ENCODE measurements at regions of chr13 and their contacts with region 1.

Region 1: GRCh38 chr13:24995226-24995804 is 100.6 kb upstream of the PABPC3 start:
- DNase-seq: peak; percentile 75
- ATAC-seq: peak; percentile 96
- H3K4me3 ChIP-seq: no peak overlapping the region
- H3K27ac ChIP-seq: no peak overlapping the region
- H3K4me1 ChIP-seq: no peaks in the 10 kb centered on the region
- H3K27me3 ChIP-seq: no peaks in the 10 kb centered on the region; a peak in 2 of 5 replicates
- CTCF ChIP-seq: peak; percentile 78
- EP300 ChIP-seq: no peak
- POLR2A ChIP-seq: no peak
- RAD21 ChIP-seq: 0 out of 2 replicates have a peak, but pooled peaks have one; percentile 10

Region 2: GRCh38 chr13:25032160-25032559 is 36.8 kb after region 1 on chr13:
- CTCF ChIA-PET with region 1: interaction called, 19 read pairs
- POLR2A ChIA-PET with region 1: no interaction called
- in situ Hi-C with region 1: loop called (anchors 5 kb)
- intact Hi-C with region 1: loop called (anchors 1 kb)
- DNase-seq: no peak
- ATAC-seq: no peak
- H3K4me3 ChIP-seq: no peak overlapping the region
- H3K27ac ChIP-seq: no peak overlapping the region
- H3K4me1 ChIP-seq: no peaks in the 10 kb centered on the region
- H3K27me3 ChIP-seq: peaks cover 0 to 4% of the 10 kb centered on the region in 2 experiments; a peak in 1 of 5 replicates
- CTCF ChIP-seq: no peak
- EP300 ChIP-seq: no peak
- POLR2A ChIP-seq: no peak
- RAD21 ChIP-seq: no peak

Region 3: DNA sequence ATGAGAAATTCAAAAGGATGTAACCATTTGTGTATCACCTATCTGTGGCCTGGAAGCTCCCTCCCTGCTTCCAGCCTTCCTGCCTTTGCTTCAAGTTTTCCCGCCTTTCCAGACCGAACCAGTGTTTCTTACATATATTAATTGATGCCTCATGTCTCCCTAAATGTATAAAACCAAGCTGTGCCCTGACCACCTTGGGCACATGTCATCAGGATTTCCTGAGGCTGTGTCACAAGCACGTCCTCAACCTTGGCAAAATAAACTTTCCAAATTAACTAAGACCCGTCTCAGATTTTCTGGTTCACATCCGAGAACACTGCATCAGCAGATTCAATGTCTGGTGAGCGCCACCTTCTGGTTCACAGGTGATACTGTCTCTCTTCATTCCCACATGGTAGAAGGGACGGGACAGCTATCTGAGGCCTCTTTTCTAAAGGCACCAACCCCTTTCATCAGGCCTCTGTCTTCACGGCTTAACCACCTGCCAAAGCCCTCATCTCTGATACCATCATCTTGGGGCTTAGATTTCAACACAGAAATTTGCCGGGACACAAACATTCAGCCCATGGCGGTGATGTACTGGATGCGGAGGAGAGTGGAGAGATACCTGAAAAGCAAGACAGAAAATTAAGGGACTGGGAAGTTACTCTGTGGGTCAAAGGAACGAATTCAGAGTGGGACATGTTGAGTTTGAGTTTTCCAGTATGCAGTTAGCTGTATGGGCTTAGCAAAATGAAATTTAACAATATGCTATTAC is 41.9 kb after region 1 on chr13:
- CTCF ChIA-PET with region 1: interaction called, 19 read pairs
- POLR2A ChIA-PET with region 1: no interaction called
- in situ Hi-C with region 1: loop called (anchors 5 kb)
- intact Hi-C with region 1: loop called (anchors 1 kb)
- DNase-seq: peak; percentile 52
- ATAC-seq: peak; percentile 93
- H3K4me3 ChIP-seq: no peak overlapping the region
- H3K27ac ChIP-seq: no peak overlapping the region
- H3K4me1 ChIP-seq: no peaks in the 10 kb centered on the region
- H3K27me3 ChIP-seq: peaks cover 0 to 11% of the 10 kb centered on the region in 2 experiments; a peak in 3 of 5 replicates
- CTCF ChIP-seq: peak; percentile 78
- EP300 ChIP-seq: no peak
- POLR2A ChIP-seq: no peak
- RAD21 ChIP-seq: no peak

Region 4: DNA sequence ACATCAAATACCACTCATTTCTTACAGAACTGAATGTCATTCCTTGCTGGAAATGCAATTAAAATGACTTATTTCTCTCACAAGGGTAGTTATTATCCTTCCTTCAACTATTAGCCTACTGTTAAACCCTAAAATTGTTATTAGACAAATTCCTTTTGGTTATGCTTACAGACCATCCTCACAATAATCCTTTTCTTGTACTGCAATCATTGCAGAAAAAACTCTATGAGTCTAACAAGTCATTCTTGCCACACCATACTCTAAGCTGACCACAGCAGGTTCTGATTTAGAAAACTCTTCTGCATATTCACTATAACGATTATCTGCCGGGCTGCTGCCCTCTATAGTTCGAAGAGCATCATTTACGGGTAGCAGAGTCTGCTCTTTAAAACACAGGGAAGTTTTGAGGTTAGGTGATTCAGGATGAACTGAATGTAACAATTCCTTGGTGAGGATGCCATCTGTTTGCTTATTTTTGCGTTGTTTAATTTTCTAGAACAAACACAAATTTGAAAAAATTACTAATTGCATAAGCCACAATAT is 253.8 kb after region 1 on chr13:
- CTCF ChIA-PET with region 1: no interaction called
- POLR2A ChIA-PET with region 1: no interaction called
- in situ Hi-C with region 1: no loop called
- intact Hi-C with region 1: no loop called
- DNase-seq: peak; percentile 19
- ATAC-seq: peak; percentile 69
- H3K4me3 ChIP-seq: no peak overlapping the region
- H3K27ac ChIP-seq: no peak overlapping the region
- H3K4me1 ChIP-seq: peaks cover 8% of the 10 kb centered on the region
- H3K27me3 ChIP-seq: no peaks in the 10 kb centered on the region
- CTCF ChIP-seq: peak; percentile 33; the same call in 1 of the 2 replicates
- EP300 ChIP-seq: no peak
- POLR2A ChIP-seq: no peak
- RAD21 ChIP-seq: no peak

Region 5: GRCh38 chr13:26095338-26095737 is 1100.0 kb after region 1 on chr13:
- CTCF ChIA-PET with region 1: no interaction called
- POLR2A ChIA-PET with region 1: no interaction called
- in situ Hi-C with region 1: loop called (anchors 5 kb)
- intact Hi-C with region 1: no loop called
- DNase-seq: no peak
- ATAC-seq: no peak
- H3K4me3 ChIP-seq: no peak overlapping the region
- H3K27ac ChIP-seq: no peak overlapping the region
- H3K4me1 ChIP-seq: no peaks in the 10 kb centered on the region
- H3K27me3 ChIP-seq: peaks cover 0 to 3% of the 10 kb centered on the region in 2 experiments; a peak in 1 of 5 replicates
- CTCF ChIP-seq: no peak
- EP300 ChIP-seq: no peak
- POLR2A ChIP-seq: no peak
- RAD21 ChIP-seq: no peak

Measured in HepG2 (cell line).